K562 (cell line): ENCODE measurements at regions of chr12 and their contacts with region 1.

Region 1: GRCh38 chr12:7959701-7960121 is 23.7 kb upstream of the SLC2A3 start:
- DNase-seq: peak; percentile 17 to 68 (median 22)
- ATAC-seq: peak; percentile 56
- H3K4me3 ChIP-seq: peak overlapping the region; percentile 33
- H3K27ac ChIP-seq: peak overlapping the region; percentile 88
- H3K4me1 ChIP-seq: peaks cover 10 to 35% of the 10 kb centered on the region in 2 experiments; a peak in 4 of 5 replicates
- H3K27me3 ChIP-seq: no peaks in the 10 kb centered on the region
- CTCF ChIP-seq: no peak
- EP300 ChIP-seq: no peak
- POLR2A ChIP-seq: no peak
- RAD21 ChIP-seq: peak in 1 of 2 experiments; percentile 9; a peak in 1 of 4 replicates

Region 2: DNA sequence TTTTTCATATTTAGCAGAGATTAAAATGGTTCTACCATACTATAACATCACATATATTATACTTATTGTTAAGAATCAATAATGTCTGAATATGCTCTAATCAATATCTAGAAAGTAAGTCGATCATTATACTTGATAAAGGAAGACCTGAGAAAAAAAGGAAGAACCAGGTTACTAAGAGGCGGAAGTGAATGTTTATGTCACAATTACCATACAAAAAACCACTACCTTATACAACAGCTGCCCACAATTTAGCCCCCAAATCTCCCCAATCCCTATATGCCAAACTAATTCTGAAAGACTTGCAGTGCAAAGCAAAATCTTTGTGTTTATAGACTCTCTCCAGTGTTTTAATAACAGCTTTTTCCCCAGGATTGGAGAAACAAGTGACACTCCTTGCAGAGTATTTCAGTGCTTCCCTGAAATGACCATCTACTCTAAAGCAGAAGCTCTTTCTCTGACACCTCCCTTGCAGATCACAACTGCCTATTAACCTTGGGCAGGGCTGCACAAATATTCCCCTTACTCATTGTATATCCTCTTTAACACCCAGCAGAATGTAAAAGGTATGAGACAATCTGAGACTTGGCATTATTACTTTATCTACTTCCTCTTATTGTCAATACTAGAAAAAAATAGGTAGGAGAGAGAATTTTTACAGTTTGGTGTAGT is 11.0 kb before region 1 on chr12:
- CTCF ChIA-PET with region 1: no interaction called
- POLR2A ChIA-PET with region 1: interaction called, 12 read pairs
- in situ Hi-C with region 1: no loop called
- intact Hi-C with region 1: no loop called
- DNase-seq: peak in 1 of 4 experiments; percentile 20
- ATAC-seq: peak; percentile 81
- H3K4me3 ChIP-seq: no peak overlapping the region
- H3K27ac ChIP-seq: peak overlapping the region; percentile 68; the same call in 2 of the 3 replicates
- H3K4me1 ChIP-seq: peaks cover 6 to 13% of the 10 kb centered on the region in 2 experiments; a peak in 3 of 5 replicates
- H3K27me3 ChIP-seq: no peaks in the 10 kb centered on the region
- CTCF ChIP-seq: no peak
- EP300 ChIP-seq: no peak
- POLR2A ChIP-seq: no peak
- RAD21 ChIP-seq: no peak

Region 3: GRCh38 chr12:7995266-7995963 is 35.7 kb after region 1 on chr12:
- CTCF ChIA-PET with region 1: no interaction called
- POLR2A ChIA-PET with region 1: interaction called, 3 read pairs
- in situ Hi-C with region 1: no loop called
- intact Hi-C with region 1: loop called (anchors 2 kb)
- DNase-seq: peak; percentile 37 to 78 (median 41)
- ATAC-seq: peak; percentile 99
- H3K4me3 ChIP-seq: no peak overlapping the region
- H3K27ac ChIP-seq: no peak overlapping the region
- H3K4me1 ChIP-seq: peaks cover 2 to 12% of the 10 kb centered on the region in 2 experiments; a peak in 3 of 5 replicates
- H3K27me3 ChIP-seq: no peaks in the 10 kb centered on the region
- CTCF ChIP-seq: peak; percentile 75 to 80 (median 78)
- EP300 ChIP-seq: no peak
- POLR2A ChIP-seq: no peak
- RAD21 ChIP-seq: peak; percentile 95 to 97